Activated CD8-positive, alpha-beta T cell treated with anti-CD3 and anti-CD28 coated beads, Interleukin-2, amount 10 ng/mL, durations not matched to agents 7 days and 5 days (primary cell): ENCODE measurements at regions of chr2 and their contacts with region 1.

Region 1: DNA sequence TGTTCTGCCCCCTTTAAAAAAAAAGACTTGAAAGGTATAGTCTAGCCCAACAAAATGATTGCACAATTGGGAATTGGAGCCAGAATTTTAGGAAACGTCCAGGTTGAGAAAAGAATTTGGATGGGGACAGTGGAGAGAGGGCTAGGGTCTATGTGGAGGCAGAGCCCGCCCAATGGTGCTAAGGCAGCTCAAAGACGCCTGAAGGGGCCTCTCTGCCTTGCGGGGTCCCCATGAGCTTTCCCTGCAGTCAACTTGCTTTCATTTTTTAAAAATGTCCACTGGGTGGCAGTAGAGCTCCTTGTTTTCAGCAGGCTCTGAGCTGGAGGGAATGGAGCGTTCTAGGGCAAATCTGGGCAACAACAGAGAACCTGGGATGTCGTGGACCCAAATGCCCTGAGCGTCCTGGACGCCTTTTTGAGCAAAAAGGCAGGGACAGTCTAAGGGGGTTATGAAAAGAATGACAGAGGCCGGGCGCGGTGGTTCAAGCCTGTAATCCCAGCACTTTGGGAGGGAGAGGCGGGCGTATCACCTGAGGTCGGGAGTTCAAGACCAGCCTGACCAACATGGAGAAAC is 40.2 kb upstream of the ITM2C start:
- DNase-seq: peak; percentile 76
- ATAC-seq: peak; percentile 80
- H3K4me3 Mint-ChIP-seq: peak overlapping the region; percentile 42
- H3K27ac Mint-ChIP-seq: no peak overlapping the region
- H3K4me1 Mint-ChIP-seq: peaks cover 24% of the 10 kb centered on the region
- H3K27me3 Mint-ChIP-seq: peaks cover 27% of the 10 kb centered on the region

Region 2: DNA sequence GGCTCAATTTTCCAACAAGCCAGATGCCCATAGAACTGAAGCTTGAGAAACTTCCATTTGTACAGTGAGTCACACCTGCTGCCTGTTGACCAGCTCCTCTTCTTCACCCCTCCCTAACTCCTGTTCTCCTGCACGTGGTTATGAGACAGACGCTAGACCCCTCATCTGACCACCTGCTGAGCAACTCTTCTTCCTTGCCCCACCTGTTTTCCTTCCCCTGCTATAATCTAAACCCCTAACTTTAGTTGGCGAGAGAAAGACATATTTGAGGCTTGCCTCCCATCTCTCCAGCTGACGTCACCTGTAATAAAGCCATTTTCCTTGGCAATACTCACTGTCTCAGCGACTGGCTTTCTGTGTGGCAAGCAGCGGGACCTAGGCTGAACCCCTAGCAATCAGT is 18.0 kb after region 1 on chr2:
- CTCF ChIA-PET with region 1: interaction called, 30 read pairs
- POLR2A ChIA-PET with region 1: no interaction called
- DNase-seq: no peak
- ATAC-seq: no peak
- H3K4me3 Mint-ChIP-seq: no peak overlapping the region
- H3K27ac Mint-ChIP-seq: no peak overlapping the region
- H3K4me1 Mint-ChIP-seq: peaks cover 3% of the 10 kb centered on the region
- H3K27me3 Mint-ChIP-seq: peaks cover 22% of the 10 kb centered on the region

Region 3: DNA sequence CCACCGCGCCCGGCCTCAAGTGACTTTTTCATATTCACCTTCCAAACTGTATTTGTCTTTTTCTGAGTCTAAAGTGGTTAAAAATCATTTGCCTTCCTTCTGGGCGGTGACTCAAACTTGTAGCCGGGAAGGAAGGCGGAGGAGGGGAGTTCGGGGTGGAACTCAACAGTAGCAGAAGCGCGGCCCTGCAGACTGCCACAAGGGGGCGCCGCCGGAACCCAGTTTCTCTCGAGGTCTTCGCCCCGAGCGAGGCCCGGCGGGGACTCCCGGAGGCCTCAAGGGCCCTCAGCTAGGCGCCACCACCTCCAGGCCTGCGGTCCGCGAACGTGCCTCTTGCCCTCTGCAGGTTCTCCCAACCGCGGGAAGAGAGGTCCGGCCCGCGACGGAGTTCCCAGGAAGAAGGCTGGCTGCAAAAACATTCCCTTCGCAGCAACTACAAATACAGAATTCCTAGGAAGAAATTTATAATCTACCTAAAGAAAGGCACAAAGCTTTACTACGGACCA is 23.4 kb after region 1 on chr2:
- CTCF ChIA-PET with region 1: interaction called, 30 read pairs
- POLR2A ChIA-PET with region 1: no interaction called
- DNase-seq: peak; percentile 92
- ATAC-seq: peak; percentile 97
- H3K4me3 Mint-ChIP-seq: no peak overlapping the region
- H3K27ac Mint-ChIP-seq: no peak overlapping the region
- H3K4me1 Mint-ChIP-seq: peaks cover 17% of the 10 kb centered on the region
- H3K27me3 Mint-ChIP-seq: peaks cover 35% of the 10 kb centered on the region

Region 4: GRCh38 chr2:230902180-230902899 is 77.8 kb after region 1 on chr2:
- CTCF ChIA-PET with region 1: interaction called, 16 read pairs
- POLR2A ChIA-PET with region 1: no interaction called
- DNase-seq: peak; percentile 75
- ATAC-seq: peak; percentile 52
- H3K4me3 Mint-ChIP-seq: no peak overlapping the region
- H3K27ac Mint-ChIP-seq: no peak overlapping the region
- H3K4me1 Mint-ChIP-seq: peaks cover 37% of the 10 kb centered on the region
- H3K27me3 Mint-ChIP-seq: no peaks in the 10 kb centered on the region

Region 5: DNA sequence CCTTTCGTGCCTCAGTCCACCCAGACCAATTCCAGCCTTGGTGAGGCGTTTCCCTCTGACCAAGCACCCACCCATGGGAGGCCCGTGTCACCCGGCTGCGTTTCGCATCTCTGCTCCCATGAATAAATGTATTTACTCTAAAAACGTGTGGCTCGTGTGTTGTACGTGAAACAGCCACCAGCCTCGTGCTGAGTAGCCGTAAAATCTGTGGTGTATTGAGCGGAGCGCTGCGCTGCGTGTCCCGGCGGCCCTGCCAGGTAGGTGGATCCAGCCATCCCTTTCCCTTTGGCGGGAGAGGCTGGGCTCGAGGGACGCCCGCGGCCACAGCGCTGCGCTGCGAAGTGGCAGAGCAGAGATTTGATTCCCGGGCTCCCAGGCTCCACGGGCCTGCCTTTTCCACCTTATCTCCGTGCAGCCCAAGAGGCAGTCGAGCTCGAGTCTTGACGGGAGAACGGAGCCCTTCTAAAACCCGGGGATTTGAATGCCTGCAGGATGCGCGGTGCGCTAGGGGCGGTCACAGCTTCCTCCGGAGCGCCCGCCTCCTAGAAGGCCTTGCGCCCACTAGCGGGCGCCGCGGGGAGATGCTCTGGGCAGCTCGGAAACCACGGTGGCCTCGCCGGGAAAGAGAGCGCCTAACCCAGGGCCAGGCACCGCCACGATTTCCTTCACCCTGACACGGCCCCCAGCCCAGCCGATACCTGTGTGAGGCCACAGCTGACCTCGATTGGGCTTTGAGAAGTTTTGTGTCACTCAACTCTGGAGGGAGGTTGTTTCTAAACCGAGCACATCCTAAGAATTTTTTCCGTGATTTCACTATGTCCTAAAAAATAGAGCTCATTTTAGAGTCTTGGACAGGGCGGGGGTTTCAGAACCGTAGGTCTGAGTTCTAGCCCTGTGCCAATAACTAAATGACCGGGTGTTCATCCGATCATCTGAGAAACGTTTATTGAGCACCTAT is 228.3 kb after region 1 on chr2:
- CTCF ChIA-PET with region 1: interaction called, 25 read pairs
- POLR2A ChIA-PET with region 1: no interaction called
- DNase-seq: peak; percentile 88
- ATAC-seq: peak; percentile 78
- H3K4me3 Mint-ChIP-seq: peak overlapping the region; percentile 84
- H3K27ac Mint-ChIP-seq: peak overlapping the region; percentile 15
- H3K4me1 Mint-ChIP-seq: peaks cover 46% of the 10 kb centered on the region
- H3K27me3 Mint-ChIP-seq: peaks cover 22% of the 10 kb centered on the region

Region 6: GRCh38 chr2:231058761-231059550 is 234.5 kb after region 1 on chr2:
- CTCF ChIA-PET with region 1: interaction called, 25 read pairs
- POLR2A ChIA-PET with region 1: no interaction called
- DNase-seq: no peak
- ATAC-seq: no peak
- H3K4me3 Mint-ChIP-seq: peak overlapping the region; percentile 95
- H3K27ac Mint-ChIP-seq: no peak overlapping the region
- H3K4me1 Mint-ChIP-seq: peaks cover 35% of the 10 kb centered on the region
- H3K27me3 Mint-ChIP-seq: peaks cover 4% of the 10 kb centered on the region